Activated T-helper 1 cell treated with anti-CD3 and anti-CD28 coated beads, Interleukin-12 subunit alpha, Interleukin-12 subunit beta, Interleukin-2, Interleukin-4 antibody, amounts not matched to agents 30 ng/mL and 10 ng/mL and 1 ng/mL, durations not matched to agents 14 hours and 24 hours and 36 hours (primary cell): ENCODE measurements at regions of chrX and their contacts with region 1.

Region 1: GRCh38 chrX:123764967-123765871 is 32.4 kb upstream of the THOC2 start:
- DNase-seq: peak; percentile 30
- H3K4me3 Mint-ChIP-seq: peak overlapping the region; percentile 77
- H3K27ac Mint-ChIP-seq: peak overlapping the region; percentile 58
- H3K4me1 Mint-ChIP-seq: peaks cover 10% of the 10 kb centered on the region
- H3K27me3 Mint-ChIP-seq: no peaks in the 10 kb centered on the region

Region 2: DNA sequence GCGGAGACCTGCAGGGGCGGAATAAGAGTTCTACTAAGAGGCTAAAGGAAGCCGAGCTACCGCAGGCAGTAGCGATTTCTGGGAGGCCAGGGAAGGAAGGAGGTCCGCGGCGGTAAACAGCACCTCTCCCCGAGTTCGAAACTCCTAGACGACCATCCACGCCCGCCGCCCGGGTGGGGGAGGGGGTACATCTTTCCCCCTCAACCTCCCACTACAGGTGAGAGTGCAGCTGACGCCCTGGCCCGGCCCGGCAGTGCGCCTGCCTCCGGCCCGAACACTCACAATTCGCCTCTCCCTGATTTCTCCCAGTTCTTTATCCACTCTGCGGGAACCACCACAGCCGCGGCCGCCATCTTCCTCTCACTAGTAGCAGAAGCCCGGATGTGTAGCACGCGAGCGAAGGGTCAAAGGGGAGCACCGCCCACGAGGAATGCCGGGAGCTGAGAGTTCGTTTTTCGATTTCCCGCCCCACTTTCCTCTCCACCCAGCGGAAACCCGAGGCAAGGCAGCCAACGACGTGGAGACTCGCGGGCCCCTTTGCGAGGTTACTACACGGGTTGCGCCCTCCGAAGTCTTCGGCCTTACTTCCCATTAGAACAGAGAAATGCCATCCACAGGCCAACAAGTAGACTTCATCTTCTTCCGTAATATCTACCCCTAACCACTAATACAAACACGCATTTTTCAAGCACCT is 32.4 kb before region 1 on chrX and contains the start of gene THOC2:
- intact Hi-C with region 1: loop called (anchors 1 kb)
- DNase-seq: peak; percentile 64
- H3K4me3 Mint-ChIP-seq: peak within 1 kb of the TSS; percentile 96
- H3K27ac Mint-ChIP-seq: peak within 1 kb of the TSS; percentile 92
- H3K4me1 Mint-ChIP-seq: peaks cover 37% of the 10 kb centered on the region
- H3K27me3 Mint-ChIP-seq: no peaks in the 10 kb centered on the region
- total RNA-seq, gene THOC2: 87.6 and 91.2 TPM in 2 replicates

Region 3: GRCh38 chrX:123859846-123860838 is 94.9 kb after region 1 on chrX and contains the start of gene XIAP:
- intact Hi-C with region 1: loop called (anchors 2 kb)
- DNase-seq: peak; percentile 66
- H3K4me3 Mint-ChIP-seq: peak within 1 kb of the TSS; percentile 89
- H3K27ac Mint-ChIP-seq: peak within 1 kb of the TSS; percentile 90
- H3K4me1 Mint-ChIP-seq: peaks cover 17% of the 10 kb centered on the region
- H3K27me3 Mint-ChIP-seq: no peaks in the 10 kb centered on the region
- total RNA-seq, gene XIAP: 35.0 and 39.1 TPM in 2 replicates

Region 4: DNA sequence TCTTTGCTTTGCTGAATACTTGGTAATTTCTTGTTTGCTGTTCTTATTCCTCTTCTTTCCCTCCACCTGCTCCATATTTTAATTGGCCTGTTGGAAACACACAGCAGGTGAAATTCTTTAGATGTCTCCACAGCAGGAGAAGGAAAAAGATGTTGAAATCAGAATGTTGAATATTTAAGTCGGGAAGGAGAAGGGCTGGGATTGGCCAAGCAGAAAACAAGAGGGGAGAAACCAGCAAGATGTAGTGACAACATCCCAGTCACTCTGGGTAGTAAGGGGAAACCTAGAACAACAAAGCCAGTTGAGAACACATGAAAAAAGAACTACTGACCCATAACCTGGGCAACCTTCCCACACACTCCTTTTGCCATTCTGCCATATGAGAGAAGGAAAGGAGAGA is 159.0 kb after region 1 on chrX:
- intact Hi-C with region 1: no loop called
- DNase-seq: no peak
- H3K4me3 Mint-ChIP-seq: no peak overlapping the region
- H3K27ac Mint-ChIP-seq: no peak overlapping the region
- H3K4me1 Mint-ChIP-seq: no peaks in the 10 kb centered on the region
- H3K27me3 Mint-ChIP-seq: no peaks in the 10 kb centered on the region